Activated B cell treated with CpG ODN at 0.5 μM for 24 hours (primary cell): ENCODE measurements at regions of chr3 and their contacts with region 1.

Region 1: GRCh38 chr3:194344012-194344411 is 7.1 kb downstream of the CPN2 start:
- DNase-seq: peak; percentile 58
- ATAC-seq: peak; percentile 66
- H3K4me3 Mint-ChIP-seq: no peak overlapping the region
- H3K27ac Mint-ChIP-seq: no peak overlapping the region
- H3K4me1 Mint-ChIP-seq: no peaks in the 10 kb centered on the region
- H3K27me3 Mint-ChIP-seq: peaks cover 8% of the 10 kb centered on the region
- CTCF ChIP-seq: no peak

Region 2: DNA sequence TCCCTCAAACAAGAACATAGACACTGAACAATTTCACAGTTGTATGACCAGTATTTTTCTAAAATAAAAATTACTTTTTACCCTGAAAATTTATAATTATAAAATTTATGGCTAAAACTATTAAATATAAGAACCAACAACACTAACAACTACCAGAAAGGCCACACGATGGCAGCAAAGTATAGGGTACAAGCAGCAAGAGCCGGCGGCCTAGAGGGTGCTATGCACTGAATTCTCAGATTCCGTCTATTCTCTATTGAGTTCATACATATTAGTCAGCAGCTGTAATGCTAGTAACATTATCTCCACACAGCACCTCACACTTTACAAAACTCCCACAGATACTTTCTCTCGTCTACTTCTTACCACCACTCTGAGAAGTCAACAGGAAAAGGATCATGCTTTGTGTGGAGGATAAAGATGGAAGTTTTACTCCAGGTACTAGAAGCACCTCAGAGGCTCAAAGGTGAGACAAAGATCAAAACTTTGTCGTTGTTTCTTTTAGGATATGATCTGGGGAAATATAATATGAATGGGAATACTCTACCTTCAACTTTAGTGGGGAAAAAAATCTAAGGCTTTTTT is 1777.2 kb before region 1 on chr3:
- CTCF ChIA-PET with region 1: no interaction called
- POLR2A ChIA-PET with region 1: no interaction called
- intact Hi-C with region 1: loop called (anchors 2 kb)
- DNase-seq: no peak
- ATAC-seq: no peak
- H3K4me3 Mint-ChIP-seq: no peak overlapping the region
- H3K27ac Mint-ChIP-seq: no peak overlapping the region
- H3K4me1 Mint-ChIP-seq: peaks cover 8% of the 10 kb centered on the region
- H3K27me3 Mint-ChIP-seq: peaks cover 15% of the 10 kb centered on the region
- CTCF ChIP-seq: peak; percentile 17

Region 3: DNA sequence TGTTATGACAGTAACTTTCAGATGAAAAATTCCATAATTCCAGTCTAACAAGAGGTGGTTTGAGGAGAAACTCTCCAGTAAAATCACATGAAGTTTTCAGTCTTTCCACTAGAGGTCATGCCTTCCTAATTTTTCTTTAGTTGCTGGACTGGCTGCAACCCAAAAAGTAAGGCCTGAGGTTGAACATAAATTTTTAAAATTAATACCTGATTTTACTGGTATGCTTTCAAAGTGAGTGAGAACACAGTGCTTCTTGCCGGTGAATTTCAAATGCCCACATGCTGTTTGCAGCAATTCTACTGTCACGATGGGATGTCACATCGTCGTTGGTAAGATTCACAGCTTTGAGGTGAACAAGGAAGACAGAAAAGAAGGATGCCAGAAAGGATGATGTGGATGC is 1527.7 kb before region 1 on chr3:
- CTCF ChIA-PET with region 1: no interaction called
- POLR2A ChIA-PET with region 1: no interaction called
- intact Hi-C with region 1: loop called (anchors 10 kb)
- DNase-seq: no peak
- ATAC-seq: no peak
- H3K4me3 Mint-ChIP-seq: no peak overlapping the region
- H3K27ac Mint-ChIP-seq: no peak overlapping the region
- H3K4me1 Mint-ChIP-seq: no peaks in the 10 kb centered on the region
- H3K27me3 Mint-ChIP-seq: peaks cover 3% of the 10 kb centered on the region
- CTCF ChIP-seq: no peak

Region 4: GRCh38 chr3:193665370-193665989 is 678.5 kb before region 1 on chr3:
- CTCF ChIA-PET with region 1: interaction called, 17 read pairs
- POLR2A ChIA-PET with region 1: no interaction called
- intact Hi-C with region 1: loop called (anchors 1 kb)
- DNase-seq: no peak
- ATAC-seq: no peak
- H3K4me3 Mint-ChIP-seq: no peak overlapping the region
- H3K27ac Mint-ChIP-seq: no peak overlapping the region
- H3K4me1 Mint-ChIP-seq: peaks cover 6% of the 10 kb centered on the region
- H3K27me3 Mint-ChIP-seq: no peaks in the 10 kb centered on the region
- CTCF ChIP-seq: peak; percentile 95

Region 5: DNA sequence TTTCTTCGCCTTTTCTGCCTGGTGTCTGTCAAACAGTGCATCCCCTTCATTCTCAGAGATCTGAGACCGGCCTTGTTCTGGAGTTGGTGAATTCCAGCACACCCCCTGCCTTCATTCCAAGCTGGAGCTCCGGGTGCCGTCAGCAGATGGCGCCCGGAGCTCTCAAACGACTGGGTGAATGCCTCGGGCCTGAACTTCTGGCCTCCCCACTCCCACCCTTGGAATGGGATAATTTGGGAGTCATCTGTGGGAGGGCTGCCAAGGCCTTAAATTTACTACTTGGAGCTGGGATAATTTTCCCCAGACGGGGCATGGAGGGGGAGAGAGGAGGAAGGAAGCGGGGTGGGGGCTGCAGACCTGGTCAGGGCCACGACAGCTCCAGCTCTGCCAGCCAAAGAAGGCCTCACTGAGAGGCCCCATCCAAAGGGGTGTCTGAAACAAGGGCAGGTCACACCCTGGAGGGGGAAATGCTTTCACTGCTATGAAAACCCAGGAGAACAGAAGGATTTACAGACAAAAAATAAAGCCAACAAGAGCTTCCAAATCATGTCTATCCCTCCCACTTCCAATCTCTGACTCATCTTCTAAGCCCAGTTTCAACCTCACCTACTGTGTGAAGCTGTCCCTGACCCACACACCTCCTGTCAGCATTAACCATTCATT is 563.1 kb before region 1 on chr3:
- CTCF ChIA-PET with region 1: interaction called, 25 read pairs
- POLR2A ChIA-PET with region 1: no interaction called
- intact Hi-C with region 1: loop called (anchors 1 kb)
- DNase-seq: no peak
- ATAC-seq: peak; percentile 42
- H3K4me3 Mint-ChIP-seq: no peak overlapping the region
- H3K27ac Mint-ChIP-seq: no peak overlapping the region
- H3K4me1 Mint-ChIP-seq: peaks cover 13% of the 10 kb centered on the region
- H3K27me3 Mint-ChIP-seq: peaks cover 34% of the 10 kb centered on the region
- CTCF ChIP-seq: no peak

Region 6: GRCh38 chr3:194333212-194333980 is 10.6 kb before region 1 on chr3:
- CTCF ChIA-PET with region 1: interaction called, 55 read pairs
- POLR2A ChIA-PET with region 1: no interaction called
- intact Hi-C with region 1: loop called (anchors 1 kb)
- DNase-seq: peak; percentile 87
- ATAC-seq: peak; percentile 96
- H3K4me3 Mint-ChIP-seq: peak overlapping the region; percentile 76
- H3K27ac Mint-ChIP-seq: no peak overlapping the region
- H3K4me1 Mint-ChIP-seq: peaks cover 7% of the 10 kb centered on the region
- H3K27me3 Mint-ChIP-seq: peaks cover 28% of the 10 kb centered on the region
- CTCF ChIP-seq: peak; percentile 97